Activated B cell treated with CpG ODN at 0.5 μM for 24 hours (primary cell): ENCODE measurements at regions of chr14 and their contacts with region 1.

Region 1: GRCh38 chr14:67599698-67600561 is at the start of gene PIGH:
- DNase-seq: peak; percentile 99
- ATAC-seq: peak; percentile 90
- H3K4me3 Mint-ChIP-seq: peak within 1 kb of the TSS; percentile 96
- H3K27ac Mint-ChIP-seq: peak within 1 kb of the TSS; percentile 95
- H3K4me1 Mint-ChIP-seq: peaks cover 61% of the 10 kb centered on the region
- H3K27me3 Mint-ChIP-seq: no peaks in the 10 kb centered on the region
- CTCF ChIP-seq: no peak
- total RNA-seq, gene PIGH: 21.9 and 26.4 TPM in 2 replicates

Region 2: DNA sequence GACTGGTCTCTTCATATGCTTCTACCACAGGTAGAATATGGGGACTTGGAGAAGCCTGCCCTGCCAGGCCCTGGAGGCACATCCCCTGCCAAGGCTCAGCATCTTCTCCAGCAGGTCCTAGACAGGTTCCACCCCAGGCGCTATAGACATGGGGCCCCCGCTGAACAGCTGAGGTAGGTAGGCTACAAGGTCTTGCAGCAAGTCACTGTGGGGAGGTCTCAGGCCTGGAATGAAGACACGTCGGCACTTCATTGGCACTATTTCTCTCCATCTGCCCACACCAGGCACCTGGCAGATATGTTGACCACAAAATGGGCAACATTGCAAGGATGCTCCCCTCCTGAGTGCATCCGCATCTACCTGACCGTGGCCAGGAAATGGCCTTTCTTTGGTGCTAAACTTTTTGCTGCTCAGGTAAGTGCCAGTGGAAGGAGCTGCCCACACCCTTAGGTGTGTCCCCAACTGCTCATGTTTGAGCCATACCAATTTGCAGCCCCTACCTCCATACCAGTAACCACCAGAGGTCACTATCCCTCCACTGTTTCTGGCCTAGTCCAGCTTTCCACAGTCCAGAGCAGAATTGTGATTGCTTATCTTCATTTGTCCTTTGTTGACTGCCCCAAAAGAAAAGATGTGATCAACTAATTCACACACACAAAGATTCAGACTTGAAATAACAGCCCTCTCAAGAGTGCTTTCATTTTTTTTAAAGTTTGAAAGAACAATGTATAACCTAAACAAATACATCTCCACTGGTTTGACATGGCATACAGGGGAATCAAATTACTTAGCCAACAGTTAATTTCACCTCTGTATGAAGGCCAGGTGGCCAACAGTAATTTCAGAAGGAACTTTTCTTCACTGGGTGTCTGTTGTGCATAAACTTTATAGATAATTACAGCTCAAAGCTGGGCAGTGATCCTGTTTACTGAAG is 16.0 kb before region 1 on chr14:
- CTCF ChIA-PET with region 1: interaction called, 31 read pairs
- POLR2A ChIA-PET with region 1: interaction called, 5 read pairs
- intact Hi-C with region 1: no loop called
- DNase-seq: no peak
- ATAC-seq: peak; percentile 80
- H3K4me3 Mint-ChIP-seq: no peak overlapping the region
- H3K27ac Mint-ChIP-seq: no peak overlapping the region
- H3K4me1 Mint-ChIP-seq: peaks cover 5% of the 10 kb centered on the region
- H3K27me3 Mint-ChIP-seq: no peaks in the 10 kb centered on the region
- CTCF ChIP-seq: peak; percentile 46

Region 3: GRCh38 chr14:67666750-67667449 is 67.0 kb after region 1 on chr14:
- CTCF ChIA-PET with region 1: interaction called, 6 read pairs
- POLR2A ChIA-PET with region 1: interaction called, 8 read pairs
- intact Hi-C with region 1: loop called (anchors 1 kb)
- DNase-seq: no peak
- ATAC-seq: peak; percentile 87
- H3K4me3 Mint-ChIP-seq: peak overlapping the region; percentile 44
- H3K27ac Mint-ChIP-seq: peak overlapping the region; percentile 68
- H3K4me1 Mint-ChIP-seq: peaks cover 58% of the 10 kb centered on the region
- H3K27me3 Mint-ChIP-seq: no peaks in the 10 kb centered on the region
- CTCF ChIP-seq: no peak

Region 4: GRCh38 chr14:67695394-67695949 is 95.5 kb after region 1 on chr14 and contains the start of gene RDH11:
- CTCF ChIA-PET with region 1: interaction called, 3 read pairs
- POLR2A ChIA-PET with region 1: interaction called, 10 read pairs
- intact Hi-C with region 1: loop called (anchors 1 kb)
- DNase-seq: peak; percentile 59
- ATAC-seq: peak; percentile 94
- H3K4me3 Mint-ChIP-seq: peak within 1 kb of the TSS; percentile 89
- H3K27ac Mint-ChIP-seq: peak within 1 kb of the TSS; percentile 88
- H3K4me1 Mint-ChIP-seq: peaks cover 13% of the 10 kb centered on the region
- H3K27me3 Mint-ChIP-seq: no peaks in the 10 kb centered on the region
- CTCF ChIP-seq: no peak
- total RNA-seq, gene RDH11: 33.0 and 34.7 TPM in 2 replicates